ENCODE measurements at regions of chr1 and their contacts with region 1.

Region 1: DNA sequence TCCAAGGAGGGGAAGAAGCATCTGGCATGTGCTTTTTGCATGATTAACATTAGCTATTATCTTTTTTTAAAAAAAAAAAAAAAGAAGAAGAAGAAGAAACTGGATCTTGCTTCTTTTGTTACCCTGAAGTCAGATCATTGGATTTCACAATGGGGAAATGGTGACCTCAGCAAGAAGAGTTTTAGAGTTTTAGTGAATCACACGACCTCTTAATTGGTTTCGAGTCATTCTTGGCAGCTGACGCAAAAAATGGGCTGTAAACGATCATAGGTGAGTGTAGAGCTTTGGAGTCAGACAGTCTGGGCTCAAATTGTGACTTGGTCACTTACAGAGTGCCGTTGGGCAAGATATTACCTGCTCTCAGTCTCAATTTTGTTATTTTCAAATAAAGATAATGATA is 33.3 kb upstream of the PGBD5 start:
- DNase-seq: peak; percentile 100
- H3K4me3 Mint-ChIP-seq: no peak overlapping the region
- H3K27ac Mint-ChIP-seq: peak overlapping the region; percentile 75
- H3K4me1 Mint-ChIP-seq: peaks cover 26% of the 10 kb centered on the region
- H3K27me3 Mint-ChIP-seq: no peaks in the 10 kb centered on the region
- CTCF ChIP-seq: no peak

Region 2: DNA sequence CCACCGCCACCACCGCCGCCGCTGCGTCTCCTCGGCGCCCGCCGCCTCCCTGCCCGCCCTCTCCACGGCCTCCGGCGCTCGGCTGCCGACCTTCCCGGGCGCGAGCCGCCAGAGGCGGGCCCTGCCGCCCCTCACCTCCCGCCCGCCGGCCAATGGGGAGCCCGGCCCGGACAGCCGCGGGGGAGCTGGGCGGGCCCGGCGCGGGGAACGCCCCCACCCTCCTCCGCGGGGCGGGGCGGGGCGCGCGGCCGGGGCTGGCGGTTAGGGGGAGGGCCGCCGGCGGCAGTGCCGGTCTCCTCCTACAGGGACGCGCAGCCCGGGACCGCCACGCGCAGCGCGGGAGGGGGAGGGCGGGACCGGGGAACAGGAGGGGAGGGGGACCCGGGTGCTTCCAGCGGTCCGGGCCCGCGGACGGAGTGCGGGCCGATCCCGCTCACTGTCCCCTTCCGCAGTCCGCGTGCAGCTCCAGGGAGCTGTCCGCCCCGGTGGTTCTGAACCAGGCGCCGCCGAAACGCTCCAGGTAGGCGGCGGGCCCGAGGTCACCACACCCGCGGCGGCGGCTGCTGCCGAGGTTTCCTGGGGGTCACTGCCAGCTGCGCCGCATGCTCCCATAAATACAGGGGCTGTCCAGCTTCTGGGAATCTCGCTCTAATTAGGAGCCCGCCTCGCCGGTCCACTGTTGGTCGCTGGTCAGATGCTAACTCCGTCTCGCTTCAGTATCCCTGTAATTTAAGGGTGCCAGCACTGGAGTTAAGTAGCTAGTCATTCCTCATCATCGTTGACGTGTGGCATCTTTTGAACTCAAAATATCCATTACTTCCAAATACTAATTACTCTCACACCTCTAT is 33.0 kb before region 1 on chr1 and contains the start of gene PGBD5:
- CTCF ChIA-PET with region 1: interaction called, 4 read pairs
- POLR2A ChIA-PET with region 1: interaction called, 27 read pairs
- intact Hi-C with region 1: loop called (anchors 2 kb)
- DNase-seq: peak; percentile 88
- H3K4me3 Mint-ChIP-seq: peak within 1 kb of the TSS; percentile 63
- H3K27ac Mint-ChIP-seq: no peak within 1 kb of the TSS
- H3K4me1 Mint-ChIP-seq: peaks cover 17% of the 10 kb centered on the region
- H3K27me3 Mint-ChIP-seq: peaks cover 52% of the 10 kb centered on the region
- CTCF ChIP-seq: no peak
- total RNA-seq, gene PGBD5: 0.83 and 1.2 TPM in 2 replicates

Region 3: DNA sequence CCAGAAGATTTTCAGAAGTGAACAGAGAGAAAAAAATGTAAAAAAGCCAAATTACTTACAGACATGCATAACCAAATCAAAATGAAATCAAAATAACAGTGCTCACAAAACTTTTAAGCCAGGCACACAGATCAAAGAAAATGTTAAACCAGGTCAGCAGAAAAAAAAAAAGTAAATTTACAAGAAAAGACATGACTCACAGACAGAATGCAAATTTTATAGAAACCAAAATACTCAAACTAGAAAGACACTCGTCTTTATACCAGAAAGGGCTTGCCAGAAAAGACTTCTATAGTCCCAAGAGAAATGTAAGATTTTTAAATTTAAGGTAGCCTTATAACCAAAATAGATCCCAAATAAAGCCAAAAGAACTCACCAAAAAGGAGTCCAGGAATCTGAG is 96.4 kb after region 1 on chr1:
- CTCF ChIA-PET with region 1: no interaction called
- POLR2A ChIA-PET with region 1: no interaction called
- intact Hi-C with region 1: loop called (anchors 1 kb)
- DNase-seq: no peak
- H3K4me3 Mint-ChIP-seq: no peak overlapping the region
- H3K27ac Mint-ChIP-seq: no peak overlapping the region
- H3K4me1 Mint-ChIP-seq: no peaks in the 10 kb centered on the region
- H3K27me3 Mint-ChIP-seq: peaks cover 30% of the 10 kb centered on the region
- CTCF ChIP-seq: no peak

Region 4: DNA sequence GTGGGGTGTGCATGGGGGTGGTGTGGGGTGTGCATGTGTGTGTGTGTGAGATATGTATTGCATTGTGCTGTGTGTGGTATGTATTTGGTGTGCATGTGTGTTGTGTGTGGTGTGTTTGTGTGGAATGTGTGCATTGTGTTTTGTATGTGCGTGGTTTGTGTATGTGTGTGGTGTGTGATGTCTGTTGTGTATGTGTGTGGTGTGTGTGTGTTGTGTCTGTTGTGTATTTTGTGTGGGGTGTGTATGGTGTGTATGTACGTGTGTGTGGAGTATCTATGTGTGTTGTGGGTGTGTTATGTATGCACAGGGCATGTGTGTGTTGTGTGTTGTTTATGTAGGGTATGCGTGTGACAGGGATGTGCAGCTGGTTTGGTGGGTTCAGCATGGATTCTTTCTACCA is 115.0 kb after region 1 on chr1:
- CTCF ChIA-PET with region 1: no interaction called
- POLR2A ChIA-PET with region 1: no interaction called
- intact Hi-C with region 1: no loop called
- DNase-seq: no peak
- H3K4me3 Mint-ChIP-seq: no peak overlapping the region
- H3K27ac Mint-ChIP-seq: no peak overlapping the region
- H3K4me1 Mint-ChIP-seq: peaks cover 13% of the 10 kb centered on the region
- H3K27me3 Mint-ChIP-seq: peaks cover 25% of the 10 kb centered on the region
- CTCF ChIP-seq: no peak